ENCODE measurements at regions of chr2 and their contacts with region 1.

Region 1: DNA sequence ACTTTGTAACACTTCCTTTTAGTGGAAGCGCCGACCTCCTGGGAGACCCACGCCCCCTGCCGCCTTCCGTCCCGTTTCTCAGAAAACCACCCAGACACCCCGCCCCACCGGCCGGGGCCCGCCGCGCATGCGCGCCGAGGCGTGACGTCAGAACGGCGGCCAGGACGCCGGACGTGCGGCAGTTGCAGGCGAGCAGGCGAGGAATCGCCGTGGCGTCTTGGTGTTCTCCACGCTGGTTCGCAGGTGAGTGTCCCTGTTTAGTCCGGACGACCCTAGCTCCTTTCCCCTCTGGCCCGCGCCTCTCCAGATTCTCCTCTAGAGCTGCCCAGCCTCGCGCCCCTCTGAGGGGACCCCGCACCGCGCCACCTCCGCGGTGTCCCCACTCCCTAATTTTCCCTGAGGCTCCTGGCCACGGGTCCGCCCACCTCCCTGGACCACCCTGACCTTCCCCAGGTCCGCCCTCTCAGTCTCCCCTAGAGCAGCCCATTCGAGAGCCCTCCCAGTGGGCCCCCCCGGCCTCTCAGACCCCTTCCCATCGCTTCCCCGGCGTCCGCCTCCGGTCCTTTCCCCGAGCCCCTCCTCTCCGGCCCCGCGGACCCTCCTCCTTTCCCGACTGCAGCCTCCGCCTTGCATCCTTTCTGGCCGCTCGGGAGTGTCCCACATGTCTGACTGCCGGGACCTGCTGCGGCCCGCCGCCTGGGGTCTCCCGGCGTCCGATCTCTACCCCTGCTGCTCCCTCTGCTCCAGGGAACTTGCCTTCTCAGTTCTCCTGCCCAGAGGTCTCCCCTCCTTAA is at the start of gene PLEKHB2:
- DNase-seq: peak; percentile 83 to 96 (median 92)
- ATAC-seq: peak; percentile 61
- H3K4me3 ChIP-seq: peak within 1 kb of the TSS; percentile 97
- H3K4me3 Mint-ChIP-seq: peak within 1 kb of the TSS; percentile 98
- H3K27ac ChIP-seq: peak within 1 kb of the TSS; percentile 94 to 96
- H3K27ac Mint-ChIP-seq: peak within 1 kb of the TSS; percentile 98
- H3K4me1 ChIP-seq: peaks cover 43% of the 10 kb centered on the region
- H3K4me1 Mint-ChIP-seq: peaks cover 58% of the 10 kb centered on the region
- H3K27me3 ChIP-seq: no peaks in the 10 kb centered on the region
- H3K27me3 Mint-ChIP-seq: no peaks in the 10 kb centered on the region
- CTCF ChIP-seq: no peak
- total RNA-seq, gene PLEKHB2: 66.9 to 71.7 TPM

Region 2: DNA sequence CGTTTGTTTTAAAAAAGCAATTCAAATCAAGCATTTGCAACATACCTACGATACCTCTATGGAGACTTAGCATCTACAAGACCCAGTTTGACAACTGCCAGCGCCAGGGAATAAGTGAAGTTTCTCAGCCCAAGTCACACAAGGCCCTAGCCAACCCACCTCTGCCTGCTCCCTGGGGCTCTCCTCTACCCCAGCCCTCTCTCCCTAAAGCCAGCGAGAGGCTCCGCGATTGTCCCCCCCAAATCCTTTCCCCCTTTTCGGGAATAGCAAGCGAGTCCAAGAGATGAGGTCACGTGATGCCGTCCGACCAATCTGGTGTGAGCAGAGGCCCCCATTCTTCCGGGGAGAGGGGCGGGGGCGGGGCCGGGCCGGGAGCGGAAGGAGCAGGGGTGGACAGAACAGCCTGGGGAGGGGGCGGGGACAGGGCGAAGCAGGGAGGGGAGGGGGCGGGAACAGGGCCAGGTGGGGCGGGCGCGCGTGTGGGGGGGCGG is 1228.0 kb before region 1 on chr2:
- CTCF ChIA-PET with region 1: no interaction called
- POLR2A ChIA-PET with region 1: no interaction called
- intact Hi-C with region 1: loop called in 1 of 2 experiments (anchors 10 kb)
- DNase-seq: peak; percentile 72 to 93 (median 82)
- ATAC-seq: peak; percentile 90
- H3K4me3 ChIP-seq: peak overlapping the region; percentile 81
- H3K4me3 Mint-ChIP-seq: peak overlapping the region; percentile 99
- H3K27ac ChIP-seq: peak overlapping the region in 1 of 2 donors; percentile 50
- H3K27ac Mint-ChIP-seq: peak overlapping the region; percentile 92
- H3K4me1 ChIP-seq: peaks cover 15% of the 10 kb centered on the region
- H3K4me1 Mint-ChIP-seq: peaks cover 11% of the 10 kb centered on the region
- H3K27me3 ChIP-seq: no peaks in the 10 kb centered on the region
- H3K27me3 Mint-ChIP-seq: no peaks in the 10 kb centered on the region
- CTCF ChIP-seq: no peak

Region 3: DNA sequence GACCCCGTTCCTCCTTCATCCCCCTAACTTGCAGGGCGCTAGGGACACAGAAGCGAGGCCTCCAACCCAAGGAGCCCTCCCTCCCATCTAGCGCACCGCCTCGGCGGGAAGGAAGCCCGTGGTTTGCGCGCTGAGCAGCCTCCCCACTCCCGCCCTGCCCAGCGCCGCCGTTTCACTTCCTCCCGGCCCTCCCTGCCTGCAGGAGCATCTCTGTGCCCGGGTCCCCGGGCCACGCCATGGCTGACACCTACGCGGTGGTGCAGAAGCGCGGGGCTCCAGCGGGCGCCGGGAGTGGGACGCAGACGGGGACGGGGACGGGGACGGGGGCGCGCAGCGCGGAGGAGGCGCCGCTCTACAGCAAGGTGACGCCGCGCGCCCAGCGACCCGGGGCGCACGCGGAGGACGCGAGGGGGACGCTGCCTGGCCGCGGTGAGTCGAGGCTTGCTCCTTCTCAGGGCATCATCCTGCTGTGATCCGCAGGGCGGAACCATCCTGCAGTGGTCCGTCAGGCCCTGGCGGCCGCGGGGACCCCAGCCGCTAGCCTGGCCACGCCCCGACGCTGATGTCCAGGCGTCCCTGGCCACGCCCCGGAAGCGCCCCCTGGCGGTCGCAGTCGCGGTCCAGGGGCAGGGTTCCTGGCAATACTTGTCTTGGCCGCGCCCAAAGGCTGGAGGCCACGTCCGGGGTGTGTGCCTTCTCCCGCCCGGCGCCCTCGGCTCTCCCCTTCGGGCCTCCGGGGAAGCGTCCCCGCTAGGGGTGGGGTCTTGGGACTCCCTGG is 733.1 kb before region 1 on chr2:
- CTCF ChIA-PET with region 1: no interaction called
- POLR2A ChIA-PET with region 1: no interaction called
- intact Hi-C with region 1: loop called in 1 of 2 experiments (anchors 10 kb)
- DNase-seq: peak; percentile 57 to 85 (median 72)
- ATAC-seq: peak; percentile 83
- H3K4me3 ChIP-seq: peak overlapping the region; percentile 76
- H3K4me3 Mint-ChIP-seq: peak overlapping the region; percentile 92
- H3K27ac ChIP-seq: peak overlapping the region; percentile 70 to 80
- H3K27ac Mint-ChIP-seq: peak overlapping the region; percentile 97
- H3K4me1 ChIP-seq: peaks cover 71% of the 10 kb centered on the region
- H3K4me1 Mint-ChIP-seq: peaks cover 73% of the 10 kb centered on the region
- H3K27me3 ChIP-seq: no peaks in the 10 kb centered on the region
- H3K27me3 Mint-ChIP-seq: no peaks in the 10 kb centered on the region
- CTCF ChIP-seq: peak; percentile 67

Region 4: DNA sequence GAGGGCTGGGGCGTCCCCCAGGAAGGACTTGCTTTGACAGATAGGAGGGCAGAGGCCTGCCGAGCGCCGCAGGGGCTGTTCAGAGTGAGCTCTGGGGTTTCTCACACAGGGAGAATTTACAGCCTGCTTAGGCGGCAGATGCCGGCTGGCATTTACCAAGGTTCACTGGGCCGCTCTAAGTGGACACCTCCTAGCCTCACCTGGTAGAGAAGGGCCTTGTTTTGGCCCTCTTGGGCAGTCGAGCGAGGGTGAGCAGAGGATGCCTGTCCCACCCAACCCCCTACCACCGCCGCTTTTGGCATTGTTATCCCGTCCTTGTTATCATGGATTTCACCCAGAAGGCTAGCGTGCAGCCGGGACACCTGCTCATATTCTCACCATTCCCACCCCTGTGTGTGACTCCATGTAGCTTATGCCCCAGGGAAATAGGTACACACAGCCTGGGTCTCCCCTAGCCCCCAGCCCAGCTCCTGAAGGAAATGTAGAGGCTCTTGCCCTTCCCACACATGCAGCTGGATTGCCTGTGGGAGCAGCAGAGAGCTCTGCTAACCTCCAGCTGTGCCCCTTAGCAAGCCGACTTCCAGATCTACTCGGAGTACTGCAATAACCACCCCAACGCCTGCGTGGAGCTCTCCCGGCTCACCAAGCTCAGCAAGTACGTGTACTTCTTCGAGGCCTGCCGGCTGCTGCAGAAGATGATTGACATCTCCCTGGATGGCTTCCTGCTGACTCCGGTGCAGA is 64.5 kb before region 1 on chr2:
- CTCF ChIA-PET with region 1: no interaction called
- POLR2A ChIA-PET with region 1: interaction called, 10 read pairs
- intact Hi-C with region 1: no loop called
- DNase-seq: peak in 4 of 14 experiments; percentile 15 to 43 (median 31)
- ATAC-seq: peak; percentile 45
- H3K4me3 ChIP-seq: peak overlapping the region; percentile 55
- H3K4me3 Mint-ChIP-seq: peak overlapping the region; percentile 94
- H3K27ac ChIP-seq: peak overlapping the region in 1 of 2 donors; percentile 9
- H3K27ac Mint-ChIP-seq: peak overlapping the region; percentile 79
- H3K4me1 ChIP-seq: peaks cover 37% of the 10 kb centered on the region
- H3K4me1 Mint-ChIP-seq: peaks cover 33% of the 10 kb centered on the region
- H3K27me3 ChIP-seq: peaks cover 2 to 3% of the 10 kb centered on the region in 2 experiments
- H3K27me3 Mint-ChIP-seq: peaks cover 11% of the 10 kb centered on the region
- CTCF ChIP-seq: peak; percentile 25

Region 5: GRCh38 chr2:131093006-131093695 is 12.2 kb before region 1 on chr2 and contains the start of gene FAM168B:
- CTCF ChIA-PET with region 1: interaction called, 8 read pairs
- POLR2A ChIA-PET with region 1: interaction called, 83 read pairs
- intact Hi-C with region 1: loop called (anchors 1 kb)
- DNase-seq: peak; percentile 77 to 97 (median 88)
- ATAC-seq: peak; percentile 84
- H3K4me3 ChIP-seq: peak within 1 kb of the TSS; percentile 82
- H3K4me3 Mint-ChIP-seq: peak within 1 kb of the TSS; percentile 92
- H3K27ac ChIP-seq: peak within 1 kb of the TSS; percentile 79 to 90
- H3K27ac Mint-ChIP-seq: peak within 1 kb of the TSS; percentile 93
- H3K4me1 ChIP-seq: peaks cover 26% of the 10 kb centered on the region
- H3K4me1 Mint-ChIP-seq: peaks cover 32% of the 10 kb centered on the region
- H3K27me3 ChIP-seq: no peaks in the 10 kb centered on the region
- H3K27me3 Mint-ChIP-seq: no peaks in the 10 kb centered on the region
- CTCF ChIP-seq: no peak
- total RNA-seq, gene FAM168B: 74.1 to 76.4 TPM

Measured in CD4-positive, alpha-beta T cell (primary cell).